RWPE1 (cell line): ENCODE measurements at regions of chr1 and their contacts with region 1.

Region 1: GRCh38 chr1:152189657-152190442 is 30.8 kb upstream of the RPTN start:
- DNase-seq: peak; percentile 48
- H3K27ac ChIP-seq: peak overlapping the region; percentile 63
- CTCF ChIP-seq: peak; percentile 71

Region 2: GRCh38 chr1:151867785-151868411 is 322.0 kb before region 1 on chr1:
- CTCF ChIA-PET with region 1: no interaction called
- POLR2A ChIA-PET with region 1: no interaction called
- DNase-seq: peak; percentile 34
- H3K27ac ChIP-seq: peak overlapping the region; percentile 69
- CTCF ChIP-seq: no peak

Region 3: DNA sequence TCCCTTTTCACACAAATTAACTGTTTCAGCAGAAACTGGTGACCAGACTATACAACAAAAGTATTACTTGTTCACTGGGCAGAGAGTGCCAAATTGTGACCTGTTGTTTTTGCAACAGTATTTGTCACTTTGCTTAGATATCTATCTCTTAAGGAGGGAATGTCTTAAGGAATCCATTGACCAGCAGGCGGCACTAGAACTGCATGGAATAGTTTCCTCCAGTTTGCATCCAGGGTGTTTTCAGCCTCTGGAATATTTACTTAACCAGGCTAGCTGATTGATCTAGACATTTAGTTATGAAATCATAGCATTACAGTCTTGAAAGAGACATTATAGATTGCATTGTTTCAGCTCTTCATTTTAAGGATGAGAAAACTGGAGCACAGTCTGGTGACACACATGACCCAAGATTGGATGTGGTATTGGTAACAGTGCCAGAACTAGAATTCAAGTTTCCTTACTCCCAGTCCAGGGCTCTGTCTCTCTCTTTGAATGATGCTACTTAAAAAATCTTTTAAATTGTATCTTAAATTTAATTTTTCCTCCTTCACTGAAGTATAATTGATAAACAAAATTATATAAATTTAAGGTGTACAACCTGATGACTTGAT is 47.8 kb before region 1 on chr1:
- CTCF ChIA-PET with region 1: interaction called, 20 read pairs
- POLR2A ChIA-PET with region 1: no interaction called
- DNase-seq: peak; percentile 58
- H3K27ac ChIP-seq: no peak overlapping the region
- CTCF ChIP-seq: peak; percentile 89

Region 4: GRCh38 chr1:152347116-152347728 is 157.4 kb after region 1 on chr1:
- CTCF ChIA-PET with region 1: interaction called, 12 read pairs
- POLR2A ChIA-PET with region 1: no interaction called
- DNase-seq: peak; percentile 26
- H3K27ac ChIP-seq: no peak overlapping the region
- CTCF ChIP-seq: peak; percentile 91